ENCODE measurements at regions of chr1 and their contacts with region 1.

Region 1: GRCh38 chr1:182391362-182392044 is at the start of gene GLUL:
- DNase-seq: peak; percentile 94 to 96 (median 94)
- ATAC-seq: peak; percentile 90
- H3K4me3 ChIP-seq: peak within 1 kb of the TSS; percentile 91
- H3K4me1 ChIP-seq: peaks cover 19% of the 10 kb centered on the region
- CTCF ChIP-seq: no peak
- total RNA-seq, gene GLUL: 364 to 851 (median 517) TPM

Region 2: GRCh38 chr1:182084487-182085316 is 306.8 kb before region 1 on chr1:
- intact Hi-C with region 1: loop called (anchors 2 to 10 kb)
- DNase-seq: peak; percentile 84 to 94 (median 91)
- ATAC-seq: peak; percentile 92
- H3K4me3 ChIP-seq: no peak overlapping the region
- H3K4me1 ChIP-seq: peaks cover 7% of the 10 kb centered on the region
- CTCF ChIP-seq: peak; percentile 64

Region 3: DNA sequence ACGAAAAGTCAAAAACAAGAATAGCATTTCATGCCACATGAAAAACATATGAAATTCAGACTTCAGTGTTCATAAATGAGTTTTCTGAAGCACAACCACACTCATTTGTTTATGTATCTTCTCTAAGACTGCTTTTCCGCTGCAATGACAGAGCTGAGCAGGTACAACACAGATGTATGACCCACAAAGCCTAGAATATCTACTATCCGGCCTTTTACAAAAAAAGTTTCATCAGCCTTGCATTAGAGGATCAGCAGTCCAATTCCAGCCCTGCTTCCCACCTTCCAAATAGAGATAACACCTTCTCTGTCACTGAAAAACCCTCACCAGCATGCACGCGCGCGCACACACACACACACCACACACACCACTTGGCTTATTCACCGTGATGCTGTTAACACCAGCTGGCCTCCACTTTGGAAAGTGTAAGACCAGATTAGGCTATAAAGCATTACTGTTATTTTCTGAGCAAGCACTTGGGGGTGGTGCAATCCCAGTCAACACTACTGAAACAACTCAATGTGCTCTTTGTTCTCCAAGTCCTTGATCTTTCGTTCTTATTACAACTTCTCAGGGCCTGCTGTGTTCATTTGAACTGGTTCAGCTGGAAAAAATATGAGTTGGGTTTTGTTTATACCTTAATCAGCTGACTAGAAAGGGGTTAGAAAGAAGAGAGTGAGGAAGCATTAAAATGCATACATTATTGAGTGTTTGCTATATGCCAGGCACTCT is 89.9 kb before region 1 on chr1:
- intact Hi-C with region 1: loop called (anchors 5 to 10 kb)
- DNase-seq: peak in 2 of 3 donors; percentile 49 to 55
- ATAC-seq: peak; percentile 90
- H3K4me3 ChIP-seq: no peak overlapping the region
- H3K4me1 ChIP-seq: peaks cover 12% of the 10 kb centered on the region
- CTCF ChIP-seq: no peak

Region 4: GRCh38 chr1:182337736-182338571 is 53.5 kb before region 1 on chr1:
- intact Hi-C with region 1: no loop called
- DNase-seq: no peak
- ATAC-seq: no peak
- H3K4me3 ChIP-seq: no peak overlapping the region
- H3K4me1 ChIP-seq: no peaks in the 10 kb centered on the region
- CTCF ChIP-seq: no peak